GM12878 (cell line): ENCODE measurements at regions of chr11 and their contacts with region 1.

Region 1: GRCh38 chr11:2992234-2992996 is at the start of gene NAP1L4:
- DNase-seq: peak; percentile 91
- ATAC-seq: peak; percentile 90
- H3K4me3 ChIP-seq: peak within 1 kb of the TSS; percentile 97
- H3K27ac ChIP-seq: peak within 1 kb of the TSS; percentile 84
- H3K4me1 ChIP-seq: peaks cover 6% of the 10 kb centered on the region
- H3K27me3 ChIP-seq: no peaks in the 10 kb centered on the region
- CTCF ChIP-seq: no peak
- EP300 ChIP-seq: no peak
- POLR2A ChIP-seq: peak; percentile 87
- RAD21 ChIP-seq: no peak
- polyA plus RNA-seq, gene NAP1L4: 24.8 to 44.0 TPM

Region 2: DNA sequence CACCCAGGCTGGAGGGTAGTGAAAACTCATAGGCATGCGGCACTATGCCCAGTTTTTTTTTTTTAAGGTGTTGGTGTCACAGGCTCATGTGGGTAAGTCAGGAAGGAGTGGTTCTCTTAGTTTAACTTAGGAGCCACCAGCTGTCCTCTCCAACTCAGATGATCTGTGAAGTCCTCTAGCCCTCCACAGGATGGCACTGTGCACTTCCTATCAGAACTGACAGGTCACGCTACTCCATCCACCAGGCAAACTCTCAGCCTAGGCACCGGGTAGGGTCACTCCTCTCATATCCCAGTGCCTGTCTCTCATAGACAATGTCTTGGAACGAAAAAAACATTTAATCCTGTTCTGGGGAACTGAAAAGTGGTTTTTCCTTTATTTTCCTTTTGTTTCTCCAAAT is 16.8 kb before region 1 on chr11:
- CTCF ChIA-PET with region 1: interaction called, 30 read pairs
- POLR2A ChIA-PET with region 1: interaction called, 5 read pairs
- RAD21 ChIA-PET with region 1: interaction called, 7 read pairs
- SMC1A ChIA-PET with region 1: interaction called, 19 read pairs
- in situ Hi-C with region 1: no loop called
- intact Hi-C with region 1: no loop called
- DNase-seq: no peak
- ATAC-seq: peak; percentile 94
- H3K4me3 ChIP-seq: no peak overlapping the region
- H3K27ac ChIP-seq: no peak overlapping the region
- H3K4me1 ChIP-seq: no peaks in the 10 kb centered on the region
- H3K27me3 ChIP-seq: no peaks in the 10 kb centered on the region
- CTCF ChIP-seq: peak; percentile 48 to 65 (median 60); a peak in 4 of 6 replicates
- EP300 ChIP-seq: no peak
- POLR2A ChIP-seq: no peak
- RAD21 ChIP-seq: peak; percentile 66

Region 3: GRCh38 chr11:3014057-3014938 is 21.9 kb after region 1 on chr11:
- CTCF ChIA-PET with region 1: interaction called, 4 read pairs
- POLR2A ChIA-PET with region 1: interaction called, 34 read pairs
- RAD21 ChIA-PET with region 1: interaction called, 42 read pairs
- SMC1A ChIA-PET with region 1: interaction called, 29 read pairs
- in situ Hi-C with region 1: no loop called
- intact Hi-C with region 1: no loop called
- DNase-seq: no peak
- ATAC-seq: peak; percentile 88
- H3K4me3 ChIP-seq: no peak overlapping the region
- H3K27ac ChIP-seq: peak overlapping the region; percentile 34; the same call in 1 of the 2 replicates
- H3K4me1 ChIP-seq: peaks cover 17% of the 10 kb centered on the region
- H3K27me3 ChIP-seq: no peaks in the 10 kb centered on the region
- CTCF ChIP-seq: peak in 1 of 3 experiments; percentile 7; a peak in 1 of 6 replicates
- EP300 ChIP-seq: no peak
- POLR2A ChIP-seq: no peak
- RAD21 ChIP-seq: no peak

Region 4: GRCh38 chr11:3021125-3021524 is 28.7 kb after region 1 on chr11:
- CTCF ChIA-PET with region 1: interaction called, 10 read pairs
- POLR2A ChIA-PET with region 1: interaction called, 4 read pairs
- RAD21 ChIA-PET with region 1: interaction called, 16 read pairs
- SMC1A ChIA-PET with region 1: interaction called, 10 read pairs
- in situ Hi-C with region 1: no loop called
- intact Hi-C with region 1: no loop called
- DNase-seq: no peak
- ATAC-seq: peak; percentile 83
- H3K4me3 ChIP-seq: no peak overlapping the region
- H3K27ac ChIP-seq: no peak overlapping the region
- H3K4me1 ChIP-seq: peaks cover 17% of the 10 kb centered on the region
- H3K27me3 ChIP-seq: no peaks in the 10 kb centered on the region
- CTCF ChIP-seq: peak; percentile 50 to 56 (median 55)
- EP300 ChIP-seq: no peak
- POLR2A ChIP-seq: no peak
- RAD21 ChIP-seq: peak; percentile 74

Region 5: DNA sequence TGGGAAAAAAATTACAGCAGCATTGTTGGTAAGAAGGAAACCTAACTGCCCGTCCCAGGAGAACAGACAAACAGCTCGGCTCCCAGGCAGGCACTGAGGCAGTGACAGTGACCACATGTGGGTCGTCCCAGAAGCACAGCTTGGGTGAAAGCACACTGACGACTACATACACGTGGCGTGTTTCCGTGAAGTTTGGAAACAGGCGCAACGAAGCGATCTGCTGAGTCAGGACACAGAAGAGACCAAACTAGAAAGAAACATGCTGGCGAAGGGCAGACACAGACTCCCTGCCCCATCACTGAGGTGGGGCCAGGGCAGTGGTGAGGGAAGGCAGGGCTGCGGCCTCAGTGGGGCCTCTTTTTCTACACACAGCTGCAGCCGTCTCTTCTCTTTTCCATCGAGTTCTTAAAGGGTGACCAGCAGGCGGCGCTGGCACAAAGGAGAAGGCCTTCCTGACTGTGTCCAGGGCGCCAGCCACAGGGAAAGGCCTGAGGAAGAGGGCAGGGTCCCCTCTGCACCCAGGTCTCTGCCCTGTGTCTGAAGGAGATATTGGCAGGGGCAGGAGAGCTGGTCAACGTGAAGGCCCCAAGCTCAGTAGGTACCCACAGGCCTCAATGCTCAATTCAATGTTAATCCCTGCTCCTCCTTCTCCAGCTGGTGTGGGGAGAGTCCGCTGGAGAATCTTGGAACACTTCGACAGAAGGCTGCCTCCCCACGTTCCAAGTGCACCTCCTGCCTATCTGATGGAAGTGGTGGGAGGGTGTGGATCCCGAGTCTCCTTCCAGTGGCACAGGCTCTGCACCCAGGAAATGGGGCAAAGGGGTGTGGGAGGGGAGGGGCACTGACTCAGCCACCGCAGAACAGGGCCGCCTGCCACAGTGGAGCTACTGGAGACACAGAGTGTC is 44.9 kb after region 1 on chr11:
- CTCF ChIA-PET with region 1: interaction called, 17 read pairs
- POLR2A ChIA-PET with region 1: no interaction called
- RAD21 ChIA-PET with region 1: no interaction called
- SMC1A ChIA-PET with region 1: interaction called, 6 read pairs
- in situ Hi-C with region 1: no loop called
- intact Hi-C with region 1: no loop called
- DNase-seq: no peak
- ATAC-seq: peak; percentile 86
- H3K4me3 ChIP-seq: no peak overlapping the region
- H3K27ac ChIP-seq: peak overlapping the region; percentile 69
- H3K4me1 ChIP-seq: peaks cover 29% of the 10 kb centered on the region
- H3K27me3 ChIP-seq: no peaks in the 10 kb centered on the region
- CTCF ChIP-seq: peak; percentile 46 to 75 (median 68)
- EP300 ChIP-seq: no peak
- POLR2A ChIP-seq: 0 out of 2 replicates have a peak, but pooled peaks have one; percentile 22
- RAD21 ChIP-seq: peak; percentile 60

Region 6: DNA sequence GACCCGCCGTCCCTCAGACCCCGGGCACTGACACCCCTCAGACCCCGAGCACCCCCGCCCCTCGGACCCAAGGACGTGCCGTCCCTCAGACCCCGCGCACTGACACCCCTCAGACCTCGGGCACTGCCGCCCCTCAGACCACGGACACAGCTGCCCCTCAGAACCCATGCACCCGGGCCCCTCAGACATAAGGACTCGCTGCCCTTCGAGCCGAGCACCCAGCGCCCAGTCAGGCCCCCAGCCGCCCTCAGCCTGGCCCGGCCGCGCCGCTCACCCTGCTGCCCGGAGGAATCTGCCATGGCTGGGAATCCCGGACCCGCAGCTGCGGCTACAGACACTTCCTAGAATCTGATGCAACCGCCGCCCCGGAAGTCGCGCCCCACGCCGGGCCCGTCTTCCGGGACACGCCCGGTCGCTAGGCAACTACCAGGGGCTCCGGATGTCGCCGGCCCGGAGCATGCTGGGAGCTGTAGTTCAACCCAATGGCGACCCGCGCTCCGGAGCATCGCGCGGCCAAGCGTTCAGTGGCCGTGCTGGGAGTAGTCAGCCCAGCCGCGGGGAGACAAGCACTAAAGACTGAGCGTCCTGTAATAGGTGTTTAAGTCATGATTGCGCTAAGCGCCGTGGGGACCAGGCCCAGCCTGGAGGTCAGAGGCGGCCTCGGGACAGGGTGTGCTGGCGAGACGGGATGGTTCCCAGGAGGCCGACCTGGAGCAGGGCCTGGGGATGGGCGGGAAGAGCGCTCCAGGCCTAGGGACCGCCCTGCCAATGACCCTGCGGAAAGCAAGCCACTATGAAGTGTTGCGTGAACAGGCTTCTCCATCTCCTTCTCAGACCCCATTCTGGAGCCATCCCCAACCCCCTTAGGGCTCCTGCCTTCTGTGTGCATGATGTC is 64.9 kb after region 1 on chr11 and contains the start of gene CARS1:
- CTCF ChIA-PET with region 1: interaction called, 5 read pairs
- POLR2A ChIA-PET with region 1: no interaction called
- RAD21 ChIA-PET with region 1: no interaction called
- SMC1A ChIA-PET with region 1: interaction called, 3 read pairs
- in situ Hi-C with region 1: no loop called
- intact Hi-C with region 1: loop called (anchors 5 kb)
- DNase-seq: peak; percentile 45
- ATAC-seq: peak; percentile 98
- H3K4me3 ChIP-seq: peak within 1 kb of the TSS; percentile 91
- H3K27ac ChIP-seq: peak within 1 kb of the TSS; percentile 86
- H3K4me1 ChIP-seq: peaks cover 7% of the 10 kb centered on the region
- H3K27me3 ChIP-seq: no peaks in the 10 kb centered on the region; a peak in 1 of 4 replicates
- CTCF ChIP-seq: no peak
- EP300 ChIP-seq: no peak
- POLR2A ChIP-seq: peak; percentile 91
- RAD21 ChIP-seq: no peak
- polyA plus RNA-seq, gene CARS1: 7.8 to 19.7 TPM

Region 7: GRCh38 chr11:3111919-3112671 is 119.7 kb after region 1 on chr11:
- CTCF ChIA-PET with region 1: no interaction called
- POLR2A ChIA-PET with region 1: no interaction called
- RAD21 ChIA-PET with region 1: no interaction called
- SMC1A ChIA-PET with region 1: no interaction called
- in situ Hi-C with region 1: no loop called
- intact Hi-C with region 1: no loop called
- DNase-seq: no peak
- ATAC-seq: no peak
- H3K4me3 ChIP-seq: no peak overlapping the region
- H3K27ac ChIP-seq: no peak overlapping the region
- H3K4me1 ChIP-seq: no peaks in the 10 kb centered on the region
- H3K27me3 ChIP-seq: no peaks in the 10 kb centered on the region
- CTCF ChIP-seq: no peak
- EP300 ChIP-seq: no peak
- POLR2A ChIP-seq: no peak
- RAD21 ChIP-seq: no peak